ENCODE measurements at regions of chr2 and their contacts with region 1.

Region 1: GRCh38 chr2:85327822-85328617 is at the start of gene TGOLN2:
- DNase-seq: peak; percentile 96
- ATAC-seq: peak; percentile 89
- H3K4me3 Mint-ChIP-seq: peak within 1 kb of the TSS; percentile 92
- H3K27ac Mint-ChIP-seq: peak within 1 kb of the TSS; percentile 100
- H3K4me1 Mint-ChIP-seq: peaks cover 31% of the 10 kb centered on the region
- H3K27me3 Mint-ChIP-seq: no peaks in the 10 kb centered on the region
- CTCF ChIP-seq: no peak
- total RNA-seq, gene TGOLN2: 62.8 to 64.0 TPM

Region 2: GRCh38 chr2:84999553-84999955 is 328.5 kb before region 1 on chr2:
- CTCF ChIA-PET with region 1: no interaction called
- POLR2A ChIA-PET with region 1: no interaction called
- intact Hi-C with region 1: no loop called
- DNase-seq: no peak
- ATAC-seq: peak; percentile 6
- H3K4me3 Mint-ChIP-seq: peak overlapping the region; percentile 38
- H3K27ac Mint-ChIP-seq: peak overlapping the region; percentile 96
- H3K4me1 Mint-ChIP-seq: peaks cover 71% of the 10 kb centered on the region
- H3K27me3 Mint-ChIP-seq: no peaks in the 10 kb centered on the region
- CTCF ChIP-seq: no peak

Region 3: GRCh38 chr2:85148182-85148581 is 179.8 kb before region 1 on chr2:
- CTCF ChIA-PET with region 1: no interaction called
- POLR2A ChIA-PET with region 1: no interaction called
- intact Hi-C with region 1: no loop called
- DNase-seq: no peak
- ATAC-seq: no peak
- H3K4me3 Mint-ChIP-seq: no peak overlapping the region
- H3K27ac Mint-ChIP-seq: no peak overlapping the region
- H3K4me1 Mint-ChIP-seq: no peaks in the 10 kb centered on the region
- H3K27me3 Mint-ChIP-seq: peaks cover 6% of the 10 kb centered on the region
- CTCF ChIP-seq: no peak

Region 4: GRCh38 chr2:85302121-85302520 is 25.9 kb before region 1 on chr2:
- CTCF ChIA-PET with region 1: interaction called, 13 read pairs
- POLR2A ChIA-PET with region 1: interaction called, 9 read pairs
- intact Hi-C with region 1: no loop called
- DNase-seq: no peak
- ATAC-seq: no peak
- H3K4me3 Mint-ChIP-seq: no peak overlapping the region
- H3K27ac Mint-ChIP-seq: no peak overlapping the region
- H3K4me1 Mint-ChIP-seq: peaks cover 7% of the 10 kb centered on the region
- H3K27me3 Mint-ChIP-seq: peaks cover 3% of the 10 kb centered on the region
- CTCF ChIP-seq: no peak

Region 5: DNA sequence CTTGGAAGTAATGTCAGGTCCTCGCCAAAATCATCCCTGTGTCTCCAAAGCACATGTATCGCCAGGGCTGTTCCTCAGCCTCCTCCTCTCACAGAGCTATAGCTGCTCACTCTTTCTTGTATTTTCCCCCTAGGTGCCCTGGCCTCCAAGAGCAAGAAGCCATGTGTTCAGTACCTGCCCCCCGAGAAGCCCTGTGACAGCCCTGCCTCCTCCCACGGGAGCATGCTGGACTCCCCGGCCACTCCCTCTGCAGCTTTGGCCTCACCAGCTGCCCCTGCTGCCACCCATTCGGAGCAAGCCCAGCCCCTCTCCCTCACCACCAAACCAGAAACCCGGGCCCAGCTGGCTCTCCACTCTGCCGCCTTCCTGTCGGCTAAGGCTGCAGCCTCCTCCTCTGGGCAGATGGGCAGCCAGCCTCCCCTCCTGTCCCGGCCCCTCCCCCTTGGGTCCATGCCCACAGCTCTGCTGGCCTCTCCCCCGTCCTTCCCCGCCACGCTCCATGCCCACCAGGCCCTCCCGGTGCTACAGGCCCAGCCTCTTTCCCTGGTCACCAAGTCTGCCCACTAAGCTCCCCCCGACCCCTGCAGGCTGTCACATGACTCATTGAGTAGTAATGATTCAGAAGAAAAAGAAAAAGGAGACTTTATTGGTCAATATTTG is 19.0 kb before region 1 on chr2:
- CTCF ChIA-PET with region 1: interaction called, 5 read pairs
- POLR2A ChIA-PET with region 1: interaction called, 46 read pairs
- intact Hi-C with region 1: no loop called
- DNase-seq: peak; percentile 40
- ATAC-seq: peak; percentile 32
- H3K4me3 Mint-ChIP-seq: peak overlapping the region; percentile 71
- H3K27ac Mint-ChIP-seq: peak overlapping the region; percentile 74
- H3K4me1 Mint-ChIP-seq: peaks cover 31% of the 10 kb centered on the region
- H3K27me3 Mint-ChIP-seq: no peaks in the 10 kb centered on the region
- CTCF ChIP-seq: no peak

Region 6: DNA sequence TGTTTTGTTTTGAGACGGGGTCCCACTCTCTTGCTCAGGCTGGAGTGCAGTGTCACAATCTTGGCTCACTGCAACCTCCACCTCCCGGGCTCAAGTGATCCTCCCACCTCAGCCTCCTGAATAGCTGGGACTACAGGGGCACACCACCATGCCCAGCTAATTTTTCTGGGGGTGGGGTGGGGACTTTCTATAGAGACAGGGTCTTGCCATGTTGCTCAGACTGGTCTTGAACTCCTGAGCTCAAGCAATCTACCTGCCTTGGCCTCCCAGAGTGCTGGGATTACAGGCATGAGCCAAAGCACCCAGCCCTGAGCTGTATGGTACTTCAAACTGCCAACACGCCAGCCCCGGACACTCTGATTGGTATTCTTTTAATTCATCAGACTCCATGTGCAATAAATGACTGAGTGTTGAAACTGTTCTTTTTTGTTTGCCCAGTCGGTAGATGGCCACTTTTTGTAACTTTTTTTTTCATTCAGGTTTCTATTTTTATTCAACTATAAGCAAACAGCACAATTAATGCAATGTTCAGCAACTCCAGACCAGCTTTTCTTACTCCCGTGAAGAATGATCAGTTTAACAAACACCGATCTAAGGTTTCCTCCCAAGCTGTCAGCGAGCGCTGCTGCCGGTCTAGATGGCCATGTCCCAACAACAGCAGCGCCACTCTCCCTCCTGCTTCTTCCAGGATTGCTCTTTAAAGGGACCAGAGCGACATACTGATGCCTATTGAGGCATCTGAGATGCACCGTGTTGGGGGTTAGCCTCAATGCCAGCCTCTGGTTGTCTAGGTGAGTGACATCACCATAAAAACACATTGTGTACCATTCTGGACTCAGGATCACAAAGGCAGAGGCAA is 12.2 kb after region 1 on chr2:
- CTCF ChIA-PET with region 1: interaction called, 3 read pairs
- POLR2A ChIA-PET with region 1: interaction called, 15 read pairs
- intact Hi-C with region 1: no loop called
- DNase-seq: no peak
- ATAC-seq: no peak
- H3K4me3 Mint-ChIP-seq: no peak overlapping the region
- H3K27ac Mint-ChIP-seq: no peak overlapping the region
- H3K4me1 Mint-ChIP-seq: no peaks in the 10 kb centered on the region
- H3K27me3 Mint-ChIP-seq: no peaks in the 10 kb centered on the region
- CTCF ChIP-seq: no peak

Region 7: DNA sequence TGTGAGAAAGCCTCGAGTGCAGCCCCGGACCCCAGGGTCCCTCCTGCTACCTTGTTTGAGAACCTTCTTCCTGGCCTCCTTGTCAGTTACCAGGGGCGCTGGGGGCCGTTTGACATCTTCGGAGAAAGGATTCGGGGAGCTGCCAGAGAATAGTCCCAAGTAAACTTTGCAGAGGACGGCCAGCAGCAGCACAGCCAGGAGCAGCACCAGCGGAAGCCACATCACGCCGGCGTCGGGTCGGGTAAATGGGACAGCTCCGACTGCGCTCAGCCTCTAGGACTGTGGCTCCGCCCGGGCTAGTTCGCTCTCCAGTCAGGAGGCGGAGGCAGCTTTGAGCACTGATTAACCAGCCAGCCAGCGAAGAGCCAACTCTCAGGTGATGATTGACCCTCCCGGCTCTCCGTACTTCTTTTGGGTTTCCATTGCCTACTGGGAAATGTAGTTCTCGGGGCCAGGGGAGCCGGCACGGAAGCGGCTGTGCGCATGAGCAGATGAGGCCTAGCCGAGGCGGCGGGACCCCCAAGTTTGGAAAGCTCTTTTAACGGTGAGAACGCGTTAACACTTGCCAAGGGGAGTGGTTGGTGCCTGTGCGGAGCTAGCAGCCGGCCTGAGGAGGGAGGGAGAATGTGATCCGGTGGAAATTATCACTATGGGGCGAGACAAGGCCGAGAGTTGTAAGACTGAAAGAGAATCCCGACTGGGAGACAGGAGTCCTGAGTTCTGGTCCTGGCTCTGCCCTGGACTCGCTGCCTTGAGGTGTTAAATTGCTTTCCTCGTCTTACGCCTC is 26.5 kb after region 1 on chr2 and contains the starts of genes ELMOD3 and RETSAT:
- CTCF ChIA-PET with region 1: interaction called, 3 read pairs
- POLR2A ChIA-PET with region 1: interaction called, 59 read pairs
- intact Hi-C with region 1: no loop called
- DNase-seq: peak; percentile 99
- ATAC-seq: peak; percentile 99
- H3K4me3 Mint-ChIP-seq: peak within 1 kb of the TSS; percentile 95
- H3K27ac Mint-ChIP-seq: peak within 1 kb of the TSS; percentile 94
- H3K4me1 Mint-ChIP-seq: peaks cover 38% of the 10 kb centered on the region
- H3K27me3 Mint-ChIP-seq: no peaks in the 10 kb centered on the region
- CTCF ChIP-seq: no peak
- total RNA-seq, gene ELMOD3: 11.8 to 13.0 TPM
- total RNA-seq, gene RETSAT: 21.3 to 22.9 TPM